A549 (cell line): ENCODE measurements at regions of chr14 and their contacts with region 1.

Region 1: GRCh38 chr14:69726761-69727511 is 40.0 kb upstream of the SRSF5 start:
- DNase-seq: peak; percentile 59 to 85
- ATAC-seq: peak; percentile 98 to 99
- H3K4me3 ChIP-seq: peak overlapping the region; percentile 39
- H3K27ac ChIP-seq: peak overlapping the region; percentile 64 to 79
- H3K4me1 ChIP-seq: no peaks in the 10 kb centered on the region; the same call in 2 of the 3 replicates
- CTCF ChIP-seq: peak; percentile 98
- EP300 ChIP-seq: no peak
- POLR2A ChIP-seq: no peak
- RAD21 ChIP-seq: peak; percentile 97 to 99

Region 2: DNA sequence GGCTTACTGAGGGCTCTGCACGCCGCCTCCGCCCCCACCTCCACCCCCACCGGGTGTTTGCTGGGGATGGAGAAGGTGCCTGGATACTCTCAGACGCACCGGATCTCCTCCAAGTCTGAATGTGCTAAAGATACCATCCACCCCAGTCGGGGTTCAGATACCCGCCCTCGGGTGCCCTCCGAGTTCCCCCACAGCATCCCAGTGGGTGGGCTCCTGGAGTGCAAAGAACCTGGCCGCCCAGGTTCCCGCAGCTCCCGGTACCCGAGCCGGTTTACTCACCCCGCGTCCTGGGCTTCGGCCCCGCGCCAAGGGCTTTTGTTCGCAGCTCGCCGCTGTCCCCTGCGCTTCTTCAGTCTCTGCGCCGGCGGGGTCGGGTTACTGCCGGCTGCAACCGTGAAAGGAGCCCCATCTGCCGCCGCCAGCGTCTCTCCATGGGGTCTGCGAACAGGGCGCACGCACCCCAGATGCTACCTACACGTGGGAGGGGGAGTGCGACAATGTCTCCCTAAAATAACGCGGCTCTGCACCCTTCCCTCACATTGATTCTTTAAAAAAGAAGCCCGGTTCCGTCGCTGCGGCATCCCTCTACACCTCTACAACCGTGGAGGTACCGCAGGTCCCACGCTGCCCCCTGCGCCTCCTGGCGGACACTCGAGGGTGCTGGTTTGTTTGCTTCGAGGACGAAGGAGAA is 152.5 kb before region 1 on chr14 and contains the start of gene CCDC177:
- CTCF ChIA-PET with region 1: interaction called, 34 read pairs
- POLR2A ChIA-PET with region 1: no interaction called
- DNase-seq: peak; percentile 68 to 77
- ATAC-seq: peak; percentile 65 to 88
- H3K4me3 ChIP-seq: peak within 1 kb of the TSS; percentile 30
- H3K27ac ChIP-seq: no peak within 1 kb of the TSS
- H3K4me1 ChIP-seq: peaks cover 25% of the 10 kb centered on the region; the same call in 2 of the 3 replicates
- CTCF ChIP-seq: peak; percentile 93
- EP300 ChIP-seq: no peak
- POLR2A ChIP-seq: no peak
- RAD21 ChIP-seq: peak; percentile 68 to 78
- polyA plus RNA-seq, gene CCDC177: not detected in 2 replicates

Region 3: DNA sequence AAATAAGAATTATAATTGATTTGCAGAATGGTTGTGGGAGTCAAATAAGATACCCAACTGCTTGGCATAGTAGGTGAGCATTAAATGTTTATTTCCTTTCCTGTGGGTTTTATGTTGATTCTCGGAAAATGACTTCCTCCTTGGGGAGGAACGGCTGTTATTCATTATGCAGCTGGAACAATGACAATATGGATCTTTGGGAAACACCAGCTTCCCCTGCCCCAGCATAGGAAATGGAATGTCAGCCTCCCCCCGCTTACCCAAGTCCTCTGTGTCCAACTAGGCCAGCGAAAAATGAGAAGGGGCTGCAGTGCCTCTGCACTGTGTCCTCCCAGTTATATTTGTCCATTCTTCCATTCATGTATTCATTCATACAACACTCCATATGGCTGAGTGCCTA is 140.5 kb before region 1 on chr14:
- CTCF ChIA-PET with region 1: interaction called, 56 read pairs
- POLR2A ChIA-PET with region 1: no interaction called
- DNase-seq: no peak
- ATAC-seq: no peak
- H3K4me3 ChIP-seq: no peak overlapping the region
- H3K27ac ChIP-seq: no peak overlapping the region
- H3K4me1 ChIP-seq: no peaks in the 10 kb centered on the region
- CTCF ChIP-seq: no peak
- EP300 ChIP-seq: no peak
- POLR2A ChIP-seq: no peak
- RAD21 ChIP-seq: no peak

Region 4: DNA sequence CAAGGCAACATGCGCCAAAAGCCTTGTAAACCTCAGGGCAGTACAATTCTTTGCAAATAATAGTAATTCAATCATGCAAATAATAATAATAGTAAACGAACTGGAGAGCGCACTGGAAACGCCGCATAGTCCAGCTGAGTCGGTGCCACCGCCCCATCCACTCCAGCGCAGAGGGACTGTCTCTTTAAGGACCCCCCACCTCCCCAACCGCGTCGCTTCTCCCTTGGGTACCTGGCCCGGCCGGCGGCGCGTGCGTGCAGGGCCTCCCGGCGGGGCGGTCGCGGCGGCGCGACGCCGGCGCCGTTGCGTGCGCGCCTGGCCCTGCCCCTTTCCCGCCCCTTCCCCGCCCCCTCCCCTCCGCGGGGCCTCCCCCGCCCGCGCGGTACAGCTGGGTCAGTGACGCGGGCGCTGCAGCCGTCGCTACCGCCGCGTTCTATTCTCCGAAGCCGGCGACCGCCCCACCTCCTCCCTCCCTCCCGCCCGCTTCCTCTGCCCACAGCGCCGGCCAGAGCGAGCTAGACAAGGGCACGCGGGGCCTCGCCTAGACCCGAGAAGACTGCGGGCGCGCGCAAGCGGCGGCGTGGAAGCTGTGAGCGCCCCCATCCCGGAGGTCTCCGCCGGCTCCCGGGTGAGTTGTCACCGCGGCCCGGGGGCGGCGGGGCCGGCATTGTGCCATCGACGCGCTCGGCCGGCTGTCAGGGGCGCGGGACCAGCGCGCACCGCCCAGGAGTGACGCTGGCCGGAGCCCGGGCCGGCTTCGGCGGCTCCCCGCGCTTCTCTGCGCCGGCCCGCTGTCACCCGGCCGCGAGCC is 115.5 kb before region 1 on chr14 and contains the start of gene SUSD6:
- CTCF ChIA-PET with region 1: interaction called, 115 read pairs
- POLR2A ChIA-PET with region 1: no interaction called
- DNase-seq: peak; percentile 86 to 91
- ATAC-seq: peak; percentile 89 to 92
- H3K4me3 ChIP-seq: peak within 1 kb of the TSS; percentile 95
- H3K27ac ChIP-seq: peak within 1 kb of the TSS; percentile 83 to 93
- H3K4me1 ChIP-seq: peaks cover 30% of the 10 kb centered on the region
- CTCF ChIP-seq: no peak
- EP300 ChIP-seq: no peak
- POLR2A ChIP-seq: peak; percentile 35
- RAD21 ChIP-seq: peak in 1 of 2 experiments; percentile 25; a peak in 1 of 5 replicates
- polyA plus RNA-seq, gene SUSD6: 7.0 and 7.9 TPM in 2 replicates

Region 5: DNA sequence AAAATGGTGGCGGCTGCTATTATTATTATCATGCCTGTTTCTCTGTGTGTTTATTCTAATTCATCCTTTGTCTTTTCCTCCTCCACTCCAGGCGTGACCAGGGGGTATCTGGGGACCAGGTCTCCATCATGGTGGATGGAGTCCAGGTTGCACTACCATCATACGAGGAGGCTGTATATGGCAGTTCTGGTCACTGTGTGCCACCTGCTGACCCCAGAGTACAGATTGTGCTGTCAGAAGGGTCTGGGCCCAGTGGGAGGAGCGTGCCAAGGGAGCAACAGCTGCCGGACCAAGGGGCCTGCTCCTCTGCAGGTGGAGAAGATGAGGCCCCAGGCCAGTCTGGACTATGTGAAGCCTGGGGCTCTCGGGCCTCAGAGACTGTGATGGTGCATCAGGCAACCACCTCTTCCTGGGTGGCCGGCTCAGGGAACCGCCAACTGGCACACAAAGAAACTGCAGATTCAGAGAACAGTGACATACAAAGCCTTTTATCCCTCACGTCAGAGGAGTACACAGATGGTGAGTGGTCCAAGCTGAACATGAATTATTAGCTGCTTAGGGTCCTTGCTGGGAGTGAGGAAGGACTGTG is 18.3 kb before region 1 on chr14:
- CTCF ChIA-PET with region 1: interaction called, 17 read pairs
- POLR2A ChIA-PET with region 1: no interaction called
- DNase-seq: peak in 1 of 2 experiments; percentile 40
- ATAC-seq: peak; percentile 92 to 94
- H3K4me3 ChIP-seq: no peak overlapping the region
- H3K27ac ChIP-seq: no peak overlapping the region
- H3K4me1 ChIP-seq: peaks cover 15% of the 10 kb centered on the region
- CTCF ChIP-seq: peak; percentile 35; the same call in 2 of the 3 replicates
- EP300 ChIP-seq: no peak
- POLR2A ChIP-seq: no peak
- RAD21 ChIP-seq: peak; percentile 25 to 36; a peak in 2 of 5 replicates

Region 6: GRCh38 chr14:69749956-69750355 is 23.0 kb after region 1 on chr14:
- CTCF ChIA-PET with region 1: interaction called, 11 read pairs
- POLR2A ChIA-PET with region 1: no interaction called
- DNase-seq: no peak
- ATAC-seq: peak; percentile 24 to 57; a peak in 4 of 6 replicates
- H3K4me3 ChIP-seq: no peak overlapping the region
- H3K27ac ChIP-seq: 0 out of 6 replicates have a peak overlapping the region, but pooled peaks of 1 of the 2 experiments have one; percentile 27
- H3K4me1 ChIP-seq: peaks cover 12% of the 10 kb centered on the region
- CTCF ChIP-seq: no peak
- EP300 ChIP-seq: no peak
- POLR2A ChIP-seq: no peak
- RAD21 ChIP-seq: no peak